ENCODE measurements at regions of chr10 and their contacts with region 1.

Region 1: GRCh38 chr10:133378251-133379096 is 588 bp upstream of the PAOX start:
- DNase-seq: peak; percentile 54
- H3K4me3 ChIP-seq: peak overlapping the region; percentile 56 to 85 (median 58)
- H3K27ac ChIP-seq: no peak overlapping the region
- H3K4me1 ChIP-seq: peaks cover 17% of the 10 kb centered on the region
- H3K27me3 ChIP-seq: no peaks in the 10 kb centered on the region
- CTCF ChIP-seq: no peak

Region 2: DNA sequence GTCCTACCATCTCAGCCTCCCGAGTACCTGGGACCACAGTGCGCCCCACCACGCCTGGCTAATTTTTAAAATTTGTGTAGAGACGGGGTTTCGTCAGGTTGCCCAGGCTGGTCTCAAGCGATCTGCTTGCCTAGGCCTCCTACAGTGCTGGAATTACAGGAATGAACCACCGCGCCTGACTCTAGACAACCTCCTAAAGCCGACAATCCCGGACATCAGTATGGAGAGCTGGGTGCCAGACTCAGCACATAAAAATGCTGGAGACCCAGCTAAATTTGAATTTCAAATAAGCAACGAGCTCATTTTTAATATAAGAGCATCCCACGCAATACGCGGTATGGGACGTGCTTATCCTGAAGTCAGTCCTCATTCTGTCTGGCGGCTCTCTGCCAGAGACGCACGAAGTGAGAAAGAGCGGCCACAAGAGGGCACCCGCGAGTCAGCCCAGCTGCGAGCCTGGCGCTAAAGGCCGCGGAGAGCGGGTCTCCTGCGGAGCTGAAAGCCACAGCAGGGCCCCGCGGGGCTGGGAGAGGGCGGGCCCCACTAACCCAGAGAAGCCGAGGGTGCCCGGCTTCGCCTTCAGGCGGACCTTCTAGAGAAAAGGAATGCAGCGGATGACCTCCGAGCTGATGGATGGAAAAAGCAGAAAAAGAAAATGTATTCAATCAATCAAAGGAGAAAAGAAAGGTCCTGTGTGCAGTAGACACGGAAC is 48.8 kb before region 1 on chr10:
- CTCF ChIA-PET with region 1: no interaction called
- dilution Hi-C with region 1: no loop called
- in situ Hi-C with region 1: no loop called
- intact Hi-C with region 1: no loop called
- DNase-seq: peak; percentile 68
- H3K4me3 ChIP-seq: peak overlapping the region in 2 of 3 experiments; percentile 13 to 39
- H3K27ac ChIP-seq: no peak overlapping the region
- H3K4me1 ChIP-seq: peaks cover 16% of the 10 kb centered on the region
- H3K27me3 ChIP-seq: peaks cover 23% of the 10 kb centered on the region
- CTCF ChIP-seq: peak; percentile 80 to 96

Region 3: GRCh38 chr10:133394064-133394663 is 15.7 kb after region 1 on chr10 and contains the start of gene MTG1:
- CTCF ChIA-PET with region 1: no interaction called
- dilution Hi-C with region 1: no loop called
- in situ Hi-C with region 1: no loop called
- intact Hi-C with region 1: loop called (anchors 2 kb)
- DNase-seq: peak; percentile 90
- H3K4me3 ChIP-seq: peak within 1 kb of the TSS; percentile 71 to 96 (median 95)
- H3K27ac ChIP-seq: peak within 1 kb of the TSS; percentile 88
- H3K4me1 ChIP-seq: peaks cover 18% of the 10 kb centered on the region
- H3K27me3 ChIP-seq: no peaks in the 10 kb centered on the region
- CTCF ChIP-seq: peak in 1 of 2 donors; percentile 37
- total RNA-seq, gene MTG1: 21.7 to 36.4 TPM

Measured in mammary epithelial cell (primary cell).